ENCODE measurements at regions of chr1 and their contacts with region 1.

Region 1: DNA sequence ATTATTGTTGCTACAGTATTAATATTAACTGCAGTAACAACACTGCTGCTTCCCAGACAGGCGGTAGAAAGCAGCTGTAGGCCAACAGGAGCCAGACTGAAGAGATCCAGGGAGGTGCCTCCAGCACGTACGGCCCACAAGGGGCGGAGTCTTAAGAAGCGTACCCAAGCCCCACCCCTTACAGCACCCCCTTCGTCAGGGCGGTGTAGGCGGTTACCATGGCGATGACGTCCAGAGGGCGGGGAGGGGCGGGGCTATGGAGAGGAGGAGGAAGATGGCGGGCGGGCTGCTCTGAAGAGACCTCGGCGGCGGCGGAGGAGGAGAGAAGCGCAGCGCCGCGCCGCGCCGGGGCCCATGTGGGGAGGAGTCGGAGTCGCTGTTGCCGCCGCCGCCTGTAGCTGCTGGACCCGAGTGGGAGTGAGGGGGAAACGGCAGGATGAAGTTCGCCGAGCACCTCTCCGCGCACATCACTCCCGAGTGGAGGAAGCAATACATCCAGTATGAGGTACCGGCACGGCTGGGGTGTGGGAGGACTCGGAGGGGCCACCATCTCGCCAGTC is at the start of gene XPR1:
- DNase-seq: peak; percentile 96 to 100 (median 98)
- ATAC-seq: peak; percentile 95
- H3K4me3 ChIP-seq: peak within 1 kb of the TSS; percentile 89
- H3K4me3 Mint-ChIP-seq: peak within 1 kb of the TSS; percentile 91
- H3K27ac ChIP-seq: peak within 1 kb of the TSS; percentile 81 to 94
- H3K27ac Mint-ChIP-seq: no peak within 1 kb of the TSS
- H3K4me1 ChIP-seq: peaks cover 7% of the 10 kb centered on the region
- H3K4me1 Mint-ChIP-seq: peaks cover 17% of the 10 kb centered on the region
- H3K27me3 ChIP-seq: no peaks in the 10 kb centered on the region
- H3K27me3 Mint-ChIP-seq: no peaks in the 10 kb centered on the region
- CTCF ChIP-seq: no peak
- total RNA-seq, gene XPR1: 13.7 TPM

Region 2: DNA sequence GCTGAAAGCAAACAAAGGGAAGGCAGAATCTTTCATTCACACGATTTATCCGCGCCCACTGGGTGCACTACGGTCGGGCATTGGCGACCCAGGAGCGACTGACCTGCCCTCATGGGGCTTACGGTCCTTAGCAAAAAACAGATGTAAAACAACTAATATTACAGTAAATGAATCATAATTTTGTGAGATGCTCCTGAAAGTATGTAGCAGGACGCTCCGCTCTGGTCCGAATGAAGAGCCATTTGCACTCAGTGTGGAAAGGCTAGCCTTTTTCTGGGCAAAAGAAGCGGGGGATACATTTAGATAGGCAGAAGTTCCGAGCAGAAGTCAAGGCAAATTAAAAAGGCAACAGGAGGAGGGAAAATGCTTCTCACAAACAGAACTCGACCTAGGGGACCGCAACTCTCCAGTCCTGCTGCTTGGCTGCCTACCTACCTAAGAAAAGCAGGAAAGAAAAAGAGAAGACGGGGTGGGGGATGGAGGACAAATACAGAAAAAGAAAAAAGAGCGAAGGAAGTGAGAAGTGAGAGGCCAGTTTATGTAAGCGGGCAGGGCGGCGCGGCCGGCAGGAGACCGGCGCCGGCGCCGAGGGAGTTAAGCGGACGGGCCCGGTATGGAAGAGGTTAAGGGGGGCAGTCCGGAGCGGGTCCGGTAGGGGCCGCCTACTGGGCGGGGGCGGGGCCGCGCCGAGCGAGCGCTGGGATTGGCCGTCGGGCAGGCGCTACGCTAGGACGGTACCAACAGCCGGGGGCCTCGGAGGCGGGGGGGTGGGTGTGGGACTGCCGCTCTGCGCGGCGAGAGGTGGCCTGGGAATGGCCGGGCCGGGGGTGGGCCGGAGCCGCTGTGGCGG is 1606.5 kb before region 1 on chr1 and contains the start of gene FAM20B:
- CTCF ChIA-PET with region 1: no interaction called
- POLR2A ChIA-PET with region 1: no interaction called
- intact Hi-C with region 1: loop called in 1 of 2 experiments (anchors 5 kb)
- DNase-seq: peak; percentile 79 to 95 (median 90)
- ATAC-seq: peak; percentile 85
- H3K4me3 ChIP-seq: peak within 1 kb of the TSS; percentile 76
- H3K4me3 Mint-ChIP-seq: peak within 1 kb of the TSS; percentile 89
- H3K27ac ChIP-seq: peak within 1 kb of the TSS; percentile 46 to 51
- H3K27ac Mint-ChIP-seq: peak within 1 kb of the TSS; percentile 76
- H3K4me1 ChIP-seq: peaks cover 17% of the 10 kb centered on the region
- H3K4me1 Mint-ChIP-seq: peaks cover 48% of the 10 kb centered on the region
- H3K27me3 ChIP-seq: no peaks in the 10 kb centered on the region
- H3K27me3 Mint-ChIP-seq: no peaks in the 10 kb centered on the region
- CTCF ChIP-seq: no peak
- total RNA-seq, gene FAM20B: 12.1 to 12.9 TPM

Region 3: GRCh38 chr1:180154325-180155181 is 477.3 kb before region 1 on chr1 and contains the start of gene QSOX1:
- CTCF ChIA-PET with region 1: no interaction called
- POLR2A ChIA-PET with region 1: no interaction called
- intact Hi-C with region 1: loop called in 1 of 2 experiments (anchors 5 kb)
- DNase-seq: peak; percentile 80 to 97 (median 86)
- ATAC-seq: peak; percentile 97
- H3K4me3 ChIP-seq: peak within 1 kb of the TSS; percentile 90
- H3K4me3 Mint-ChIP-seq: peak within 1 kb of the TSS; percentile 95
- H3K27ac ChIP-seq: peak within 1 kb of the TSS; percentile 19 to 42
- H3K27ac Mint-ChIP-seq: peak within 1 kb of the TSS; percentile 82
- H3K4me1 ChIP-seq: peaks cover 27% of the 10 kb centered on the region
- H3K4me1 Mint-ChIP-seq: peaks cover 33% of the 10 kb centered on the region
- H3K27me3 ChIP-seq: no peaks in the 10 kb centered on the region
- H3K27me3 Mint-ChIP-seq: no peaks in the 10 kb centered on the region
- CTCF ChIP-seq: no peak
- total RNA-seq, gene QSOX1: 13.7 to 14.3 TPM

Region 4: GRCh38 chr1:180612632-180613031 is 19.2 kb before region 1 on chr1:
- CTCF ChIA-PET with region 1: no interaction called
- POLR2A ChIA-PET with region 1: no interaction called
- intact Hi-C with region 1: no loop called
- DNase-seq: no peak
- ATAC-seq: no peak
- H3K4me3 ChIP-seq: no peak overlapping the region
- H3K4me3 Mint-ChIP-seq: no peak overlapping the region
- H3K27ac ChIP-seq: no peak overlapping the region
- H3K27ac Mint-ChIP-seq: no peak overlapping the region
- H3K4me1 ChIP-seq: no peaks in the 10 kb centered on the region
- H3K4me1 Mint-ChIP-seq: peaks cover 6% of the 10 kb centered on the region
- H3K27me3 ChIP-seq: no peaks in the 10 kb centered on the region
- H3K27me3 Mint-ChIP-seq: no peaks in the 10 kb centered on the region
- CTCF ChIP-seq: no peak

Region 5: GRCh38 chr1:180863158-180863775 is 231.4 kb after region 1 on chr1:
- CTCF ChIA-PET with region 1: interaction called, 10 read pairs
- POLR2A ChIA-PET with region 1: interaction called, 4 read pairs
- intact Hi-C with region 1: loop called in 1 of 2 experiments (anchors 5 kb)
- DNase-seq: peak in 6 of 14 experiments; percentile 2 to 67 (median 49)
- ATAC-seq: no peak
- H3K4me3 ChIP-seq: no peak overlapping the region
- H3K4me3 Mint-ChIP-seq: no peak overlapping the region
- H3K27ac ChIP-seq: no peak overlapping the region
- H3K27ac Mint-ChIP-seq: no peak overlapping the region
- H3K4me1 ChIP-seq: no peaks in the 10 kb centered on the region
- H3K4me1 Mint-ChIP-seq: no peaks in the 10 kb centered on the region
- H3K27me3 ChIP-seq: no peaks in the 10 kb centered on the region
- H3K27me3 Mint-ChIP-seq: no peaks in the 10 kb centered on the region
- CTCF ChIP-seq: peak; percentile 88

Region 6: DNA sequence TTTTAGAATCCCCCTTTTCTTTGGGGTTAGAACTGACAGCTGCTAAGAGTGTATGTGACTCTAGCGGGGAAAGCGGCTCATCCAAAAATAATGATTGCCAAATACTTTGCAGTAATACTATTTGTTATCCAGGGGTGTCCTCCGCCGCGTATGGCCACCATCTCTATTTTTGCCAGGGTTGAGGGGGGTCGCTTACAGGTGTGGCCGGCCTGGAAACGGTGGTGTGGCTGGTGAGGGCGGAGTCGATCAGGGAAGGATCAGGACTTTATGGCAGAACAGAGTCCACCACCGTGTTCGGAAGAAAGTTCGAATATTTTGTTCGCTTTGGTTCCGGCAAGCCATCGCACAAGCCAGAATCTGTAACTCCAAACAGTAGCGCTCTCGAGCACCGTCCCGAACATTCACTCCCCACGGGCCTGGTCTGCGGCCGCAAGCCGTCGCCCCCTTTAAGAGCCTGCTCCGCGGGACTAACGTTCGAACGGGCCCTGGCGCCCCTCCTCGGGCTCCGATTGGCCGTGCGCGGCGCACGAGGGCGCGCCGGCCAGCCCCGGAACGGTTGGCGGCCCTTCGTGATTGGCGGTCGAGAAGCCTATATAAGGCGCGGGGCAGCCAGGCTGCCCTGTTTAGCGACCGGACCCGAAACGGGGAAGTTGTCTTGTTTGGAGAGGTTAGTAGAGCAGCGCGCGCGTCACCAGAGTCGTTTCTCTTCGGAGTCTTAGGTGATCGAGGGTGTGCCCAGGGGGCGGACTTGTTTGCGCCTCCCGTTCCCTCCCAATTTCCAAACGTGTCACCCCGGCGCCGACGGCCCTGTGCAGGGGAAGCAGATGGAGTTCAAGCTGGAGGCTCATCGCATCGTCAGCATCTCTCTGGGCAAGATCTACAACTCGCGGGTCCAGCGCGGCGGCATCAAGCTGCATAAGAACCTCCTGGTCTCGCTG is 456.5 kb after region 1 on chr1 and contains the start of gene IER5:
- CTCF ChIA-PET with region 1: no interaction called
- POLR2A ChIA-PET with region 1: no interaction called
- intact Hi-C with region 1: loop called in 1 of 2 experiments (anchors 5 kb)
- DNase-seq: peak; percentile 89 to 98 (median 94)
- ATAC-seq: peak; percentile 70
- H3K4me3 ChIP-seq: peak within 1 kb of the TSS; percentile 90
- H3K4me3 Mint-ChIP-seq: peak within 1 kb of the TSS; percentile 99
- H3K27ac ChIP-seq: peak within 1 kb of the TSS; percentile 95 to 97
- H3K27ac Mint-ChIP-seq: peak within 1 kb of the TSS; percentile 97
- H3K4me1 ChIP-seq: peaks cover 13% of the 10 kb centered on the region
- H3K4me1 Mint-ChIP-seq: peaks cover 53% of the 10 kb centered on the region
- H3K27me3 ChIP-seq: no peaks in the 10 kb centered on the region
- H3K27me3 Mint-ChIP-seq: no peaks in the 10 kb centered on the region
- CTCF ChIP-seq: no peak
- total RNA-seq, gene IER5: 53.8 to 54.1 TPM

Region 7: DNA sequence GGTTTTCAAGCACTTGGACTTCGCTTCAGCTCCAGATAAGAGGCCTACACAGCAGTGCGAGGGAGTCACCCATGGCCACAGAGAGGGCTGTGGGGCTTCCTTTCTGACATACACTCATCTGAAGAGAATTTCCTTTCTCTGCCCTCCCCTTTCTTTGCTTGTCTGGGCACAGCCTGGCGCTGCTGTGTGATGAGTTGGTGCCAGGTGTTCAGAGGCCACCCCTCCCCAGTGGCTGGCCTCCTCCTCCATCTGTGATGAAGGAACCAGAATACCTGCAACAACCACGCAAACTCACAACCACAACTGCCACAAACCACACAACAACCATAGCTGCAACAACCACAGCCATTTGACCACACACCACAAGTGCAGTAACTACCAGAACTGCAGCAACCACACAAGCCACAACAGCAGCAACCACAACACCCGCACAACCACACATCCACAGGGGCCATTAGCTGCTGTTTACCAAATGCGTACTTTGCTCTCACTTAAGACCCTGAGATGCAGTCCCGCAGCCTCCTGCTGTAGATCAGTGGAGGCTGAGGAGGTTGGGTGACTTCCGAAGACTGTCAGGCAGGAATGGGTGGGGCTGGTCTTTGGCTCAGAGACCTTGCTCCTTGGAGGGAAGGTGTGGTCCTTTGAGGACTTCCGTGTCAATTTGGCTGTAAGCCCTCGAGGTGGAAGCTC is 527.8 kb after region 1 on chr1:
- CTCF ChIA-PET with region 1: no interaction called
- POLR2A ChIA-PET with region 1: no interaction called
- intact Hi-C with region 1: loop called in 1 of 2 experiments (anchors 5 kb)
- DNase-seq: peak; percentile 30 to 81 (median 49)
- ATAC-seq: peak; percentile 78
- H3K4me3 ChIP-seq: no peak overlapping the region
- H3K4me3 Mint-ChIP-seq: peak overlapping the region; percentile 64
- H3K27ac ChIP-seq: peak overlapping the region in 1 of 2 donors; percentile 52
- H3K27ac Mint-ChIP-seq: peak overlapping the region; percentile 89
- H3K4me1 ChIP-seq: peaks cover 43% of the 10 kb centered on the region
- H3K4me1 Mint-ChIP-seq: peaks cover 45% of the 10 kb centered on the region
- H3K27me3 ChIP-seq: no peaks in the 10 kb centered on the region
- H3K27me3 Mint-ChIP-seq: no peaks in the 10 kb centered on the region
- CTCF ChIP-seq: no peak

Measured in CD4-positive, alpha-beta T cell (primary cell).